Endothelial cell of umbilical vein (primary cell): ENCODE measurements at regions of chr1 and their contacts with region 1.

Region 1: DNA sequence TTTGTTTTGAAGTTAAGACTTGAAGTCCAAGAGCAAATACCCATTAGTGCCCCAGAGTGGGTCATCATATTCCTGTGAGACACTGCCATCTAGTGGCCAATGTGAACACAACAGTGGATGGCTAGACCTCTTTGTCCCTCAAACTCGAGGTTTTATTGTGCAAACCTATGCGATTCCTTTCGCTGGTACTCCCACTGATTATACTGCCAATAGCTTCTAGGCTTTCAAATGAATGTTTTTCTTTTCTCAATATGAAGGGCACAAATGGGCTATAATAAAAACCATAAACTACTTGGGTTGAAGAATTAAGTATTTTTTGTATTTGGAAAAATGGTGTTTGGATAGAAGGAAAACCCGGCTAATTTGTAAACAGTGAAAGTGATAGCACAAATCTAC is 100.4 kb upstream of the ZNF281 start:
- DNase-seq: peak; percentile 79
- H3K4me3 ChIP-seq: no peak overlapping the region
- H3K27ac ChIP-seq: no peak overlapping the region
- H3K4me1 ChIP-seq: no peaks in the 10 kb centered on the region
- H3K27me3 ChIP-seq: peaks cover 8 to 12% of the 10 kb centered on the region in 2 experiments
- CTCF ChIP-seq: peak; percentile 70 to 77
- POLR2A ChIP-seq: no peak

Region 2: GRCh38 chr1:199545780-199546179 is 964.4 kb before region 1 on chr1:
- CTCF ChIA-PET with region 1: no interaction called
- POLR2A ChIA-PET with region 1: no interaction called
- dilution Hi-C with region 1: no loop called
- intact Hi-C with region 1: loop called (anchors 5 kb)
- DNase-seq: peak; percentile 30
- H3K4me3 ChIP-seq: no peak overlapping the region
- H3K27ac ChIP-seq: no peak overlapping the region
- H3K4me1 ChIP-seq: no peaks in the 10 kb centered on the region
- H3K27me3 ChIP-seq: no peaks in the 10 kb centered on the region
- CTCF ChIP-seq: peak; percentile 17 to 49
- POLR2A ChIP-seq: no peak

Region 3: DNA sequence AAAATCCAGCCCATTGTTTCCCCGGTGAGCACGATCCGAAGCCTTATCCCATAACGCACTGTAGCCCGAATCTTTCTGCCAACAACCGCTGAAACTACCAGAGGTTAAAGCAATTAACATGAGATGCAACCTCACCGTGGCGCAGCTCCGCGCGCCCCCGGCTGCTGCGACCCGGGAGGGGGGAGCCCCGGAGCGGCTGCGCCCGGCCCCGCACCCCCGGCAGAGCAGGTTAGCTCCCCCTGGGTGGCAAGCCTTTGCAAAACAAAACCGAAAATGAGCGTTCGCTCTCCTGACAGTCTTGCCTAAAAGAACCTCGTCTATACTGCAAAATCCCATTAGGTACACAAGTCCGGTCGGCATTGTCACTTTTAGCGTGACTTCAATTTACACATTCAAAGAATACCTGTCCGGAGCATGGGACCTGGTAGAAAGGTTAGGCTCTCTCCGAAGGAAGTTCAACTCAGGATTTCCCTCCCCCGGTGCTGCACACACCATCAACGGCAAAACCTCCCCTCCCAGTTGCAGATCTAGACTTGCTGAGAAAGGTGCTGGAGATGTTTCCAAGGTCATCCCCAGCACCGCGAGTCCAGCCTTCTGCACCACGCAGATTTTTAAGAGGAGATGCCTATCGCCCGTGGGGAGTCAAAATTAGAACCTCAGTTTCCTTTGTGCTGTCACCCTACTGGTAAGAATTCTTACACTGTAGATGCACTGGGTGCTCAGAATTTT is 207.9 kb before region 1 on chr1:
- CTCF ChIA-PET with region 1: no interaction called
- POLR2A ChIA-PET with region 1: no interaction called
- dilution Hi-C with region 1: no loop called
- intact Hi-C with region 1: loop called (anchors 1 kb)
- DNase-seq: peak; percentile 44
- H3K4me3 ChIP-seq: peak overlapping the region; percentile 63 to 85 (median 81)
- H3K27ac ChIP-seq: no peak overlapping the region
- H3K4me1 ChIP-seq: peaks cover 2% of the 10 kb centered on the region
- H3K27me3 ChIP-seq: peaks cover 5 to 7% of the 10 kb centered on the region in 2 experiments
- CTCF ChIP-seq: no peak
- POLR2A ChIP-seq: no peak

Region 4: DNA sequence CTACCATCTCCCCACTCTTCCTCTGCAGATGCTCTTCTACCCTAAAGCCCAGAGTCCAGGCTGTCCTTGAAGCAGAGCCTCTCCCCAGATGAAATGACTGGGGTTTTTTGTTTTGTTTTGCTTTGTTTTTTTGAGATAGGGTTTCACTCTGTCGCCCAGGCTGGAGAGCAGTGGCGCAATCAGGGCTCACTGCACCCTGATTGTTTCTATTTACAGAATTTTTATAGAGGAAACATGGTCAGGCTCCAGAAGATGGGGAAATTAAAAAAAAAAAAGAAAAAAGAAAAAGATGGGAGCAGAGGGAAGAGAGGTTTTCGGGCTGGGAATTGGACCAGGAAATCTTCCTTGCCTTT is 56.7 kb before region 1 on chr1:
- CTCF ChIA-PET with region 1: no interaction called
- POLR2A ChIA-PET with region 1: no interaction called
- dilution Hi-C with region 1: no loop called
- intact Hi-C with region 1: no loop called
- DNase-seq: no peak
- H3K4me3 ChIP-seq: no peak overlapping the region
- H3K27ac ChIP-seq: no peak overlapping the region
- H3K4me1 ChIP-seq: peaks cover 9% of the 10 kb centered on the region
- H3K27me3 ChIP-seq: no peaks in the 10 kb centered on the region
- CTCF ChIP-seq: no peak
- POLR2A ChIP-seq: no peak

Region 5: DNA sequence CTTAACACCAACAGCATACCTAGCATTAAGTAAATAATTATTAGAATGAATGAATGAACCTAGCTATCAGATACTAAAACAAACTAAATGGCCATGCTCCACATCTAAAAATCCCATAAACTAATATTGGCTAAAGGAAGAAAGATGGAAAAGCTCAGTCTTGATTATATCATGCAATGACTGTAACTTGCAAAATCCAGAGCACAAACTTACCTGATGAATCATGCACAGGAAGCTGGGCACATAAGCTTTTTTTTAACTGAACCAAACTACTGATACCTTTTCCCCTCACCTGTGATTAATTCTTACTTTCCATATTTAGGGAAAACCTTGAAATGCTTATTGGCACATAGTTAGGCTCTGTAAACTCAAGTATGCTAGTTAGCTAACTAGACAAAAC is 40.1 kb after region 1 on chr1:
- CTCF ChIA-PET with region 1: no interaction called
- POLR2A ChIA-PET with region 1: no interaction called
- dilution Hi-C with region 1: no loop called
- intact Hi-C with region 1: no loop called
- DNase-seq: no peak
- H3K4me3 ChIP-seq: no peak overlapping the region
- H3K27ac ChIP-seq: no peak overlapping the region
- H3K4me1 ChIP-seq: no peaks in the 10 kb centered on the region
- H3K27me3 ChIP-seq: no peaks in the 10 kb centered on the region
- CTCF ChIP-seq: no peak
- POLR2A ChIP-seq: no peak

Region 6: DNA sequence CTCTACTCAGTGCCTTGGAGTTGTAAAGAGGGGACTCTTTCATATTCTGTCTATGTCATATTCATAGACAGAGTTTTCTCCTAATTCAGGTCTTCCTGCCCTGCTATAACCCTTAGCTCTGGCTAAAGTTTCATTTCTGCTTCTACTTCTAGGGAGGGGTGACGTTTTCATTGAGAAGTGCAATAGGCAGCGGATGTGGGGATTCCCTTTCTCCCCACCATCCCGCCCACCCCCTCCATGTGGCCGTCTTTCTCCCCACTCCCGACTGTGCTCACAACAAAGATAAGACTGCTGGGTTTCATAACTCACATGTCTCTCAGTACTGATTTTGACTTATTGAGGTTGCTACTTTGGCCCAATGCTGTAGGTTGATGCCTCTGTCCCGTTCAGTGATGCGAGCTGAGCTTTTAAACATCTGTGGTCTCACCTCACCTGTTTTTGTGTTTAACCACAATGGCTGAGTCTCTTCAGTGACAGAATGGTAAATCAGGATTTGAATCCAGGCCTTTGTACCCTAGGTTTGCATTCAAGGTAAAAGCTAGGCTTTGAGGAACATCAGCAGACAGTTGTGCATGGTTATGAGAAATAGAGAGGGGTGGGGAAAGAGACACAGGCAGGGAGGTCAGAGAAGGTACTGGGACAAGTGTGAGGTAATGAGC is 118.1 kb after region 1 on chr1:
- CTCF ChIA-PET with region 1: no interaction called
- POLR2A ChIA-PET with region 1: no interaction called
- dilution Hi-C with region 1: no loop called
- intact Hi-C with region 1: no loop called
- DNase-seq: no peak
- H3K4me3 ChIP-seq: no peak overlapping the region
- H3K27ac ChIP-seq: no peak overlapping the region
- H3K4me1 ChIP-seq: no peaks in the 10 kb centered on the region
- H3K27me3 ChIP-seq: no peaks in the 10 kb centered on the region
- CTCF ChIP-seq: no peak
- POLR2A ChIP-seq: no peak

Region 7: DNA sequence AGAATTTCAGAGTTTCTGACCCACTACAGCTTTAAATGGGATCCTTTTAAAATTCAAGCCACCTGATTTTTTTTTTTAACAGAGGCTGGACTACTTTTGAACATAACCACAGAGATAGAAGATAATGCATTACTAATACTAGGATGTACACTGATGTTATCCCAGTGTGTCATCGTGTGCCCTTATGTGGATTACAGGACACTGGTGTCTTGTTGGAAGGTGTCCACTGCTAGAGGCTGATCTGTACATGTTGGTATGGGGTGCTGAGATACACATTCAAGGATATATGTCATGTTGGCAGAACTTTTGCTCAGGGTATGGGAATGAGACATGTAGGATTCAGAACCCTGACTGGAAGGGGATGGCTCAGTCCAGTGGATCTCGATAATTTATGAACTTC is 440.8 kb after region 1 on chr1:
- CTCF ChIA-PET with region 1: no interaction called
- POLR2A ChIA-PET with region 1: no interaction called
- dilution Hi-C with region 1: no loop called
- intact Hi-C with region 1: no loop called
- DNase-seq: no peak
- H3K4me3 ChIP-seq: no peak overlapping the region
- H3K27ac ChIP-seq: no peak overlapping the region
- H3K4me1 ChIP-seq: no peaks in the 10 kb centered on the region
- H3K27me3 ChIP-seq: no peaks in the 10 kb centered on the region
- CTCF ChIP-seq: no peak
- POLR2A ChIP-seq: no peak